ENCODE measurements at regions of chr15 and their contacts with region 1.

Region 1: DNA sequence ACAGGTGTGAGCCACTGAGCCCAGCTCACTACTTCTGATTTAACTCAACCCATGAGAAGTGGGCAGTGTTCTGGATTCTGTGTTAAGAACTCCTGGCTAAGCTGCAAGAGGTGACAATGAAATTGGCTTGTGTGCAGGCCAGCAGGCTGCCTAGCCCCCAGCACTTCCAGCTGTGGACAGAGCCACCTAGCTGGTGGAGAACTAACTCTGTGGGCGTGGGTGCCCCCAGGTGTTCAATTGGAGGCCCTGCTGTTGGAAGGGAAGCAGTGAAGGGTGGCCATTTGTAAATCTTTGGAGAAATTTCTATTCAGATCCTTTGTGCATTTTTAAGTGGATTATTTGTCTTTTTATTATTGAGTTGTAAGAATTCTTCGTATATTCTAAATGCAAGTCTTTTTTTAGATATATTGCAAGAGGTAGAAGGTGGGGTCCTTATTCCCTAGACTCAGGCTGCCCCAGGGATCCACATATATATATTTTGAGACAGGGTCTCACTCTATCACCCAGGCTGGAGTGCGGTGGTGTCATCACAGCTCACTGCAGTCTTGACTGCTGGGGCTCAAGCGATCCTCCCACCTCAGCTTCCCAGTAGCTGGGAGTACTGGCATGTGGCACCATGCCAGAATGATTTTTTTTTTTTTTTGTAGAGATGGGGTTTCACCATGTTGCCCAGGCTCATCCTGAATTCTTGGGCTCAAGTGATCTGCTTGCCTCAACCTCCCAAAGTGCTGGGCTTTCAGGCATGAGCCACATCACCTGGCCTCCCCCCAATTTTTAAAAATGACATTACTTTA is 7.2 kb upstream of the SCAMP5 start:
- DNase-seq: peak; percentile 51 to 78 (median 62)
- ATAC-seq: peak; percentile 100
- H3K4me3 ChIP-seq: no peak overlapping the region
- H3K27ac ChIP-seq: no peak overlapping the region
- H3K4me1 ChIP-seq: no peaks in the 10 kb centered on the region
- H3K27me3 ChIP-seq: peaks cover 16 to 36% of the 10 kb centered on the region in 2 experiments
- CTCF ChIP-seq: peak; percentile 85 to 94 (median 91)
- EP300 ChIP-seq: no peak
- POLR2A ChIP-seq: no peak
- RAD21 ChIP-seq: peak; percentile 79 to 93

Region 2: GRCh38 chr15:74635228-74635627 is 353.0 kb before region 1 on chr15:
- CTCF ChIA-PET with region 1: interaction called, 3 read pairs
- POLR2A ChIA-PET with region 1: no interaction called
- in situ Hi-C with region 1: no loop called
- intact Hi-C with region 1: loop called (anchors 5 kb)
- DNase-seq: peak; percentile 75 to 83 (median 76)
- ATAC-seq: peak; percentile 89
- H3K4me3 ChIP-seq: no peak overlapping the region
- H3K27ac ChIP-seq: no peak overlapping the region
- H3K4me1 ChIP-seq: no peaks in the 10 kb centered on the region; a peak in 1 of 5 replicates
- H3K27me3 ChIP-seq: no peaks in the 10 kb centered on the region
- CTCF ChIP-seq: peak; percentile 88 to 91 (median 90)
- EP300 ChIP-seq: no peak
- POLR2A ChIP-seq: no peak
- RAD21 ChIP-seq: peak; percentile 82 to 97

Region 3: GRCh38 chr15:74768771-74769342 is 219.3 kb before region 1 on chr15:
- CTCF ChIA-PET with region 1: interaction called, 16 read pairs
- POLR2A ChIA-PET with region 1: interaction called, 3 read pairs
- in situ Hi-C with region 1: no loop called
- intact Hi-C with region 1: loop called (anchors 1 kb)
- DNase-seq: peak; percentile 72 to 80 (median 75)
- ATAC-seq: peak; percentile 75
- H3K4me3 ChIP-seq: no peak overlapping the region
- H3K27ac ChIP-seq: no peak overlapping the region
- H3K4me1 ChIP-seq: peaks cover 0 to 12% of the 10 kb centered on the region in 2 experiments; a peak in 1 of 5 replicates
- H3K27me3 ChIP-seq: peaks cover 4 to 27% of the 10 kb centered on the region in 2 experiments; a peak in 3 of 5 replicates
- CTCF ChIP-seq: peak; percentile 84 to 85 (median 84)
- EP300 ChIP-seq: no peak
- POLR2A ChIP-seq: no peak
- RAD21 ChIP-seq: peak; percentile 73 to 92

Region 4: DNA sequence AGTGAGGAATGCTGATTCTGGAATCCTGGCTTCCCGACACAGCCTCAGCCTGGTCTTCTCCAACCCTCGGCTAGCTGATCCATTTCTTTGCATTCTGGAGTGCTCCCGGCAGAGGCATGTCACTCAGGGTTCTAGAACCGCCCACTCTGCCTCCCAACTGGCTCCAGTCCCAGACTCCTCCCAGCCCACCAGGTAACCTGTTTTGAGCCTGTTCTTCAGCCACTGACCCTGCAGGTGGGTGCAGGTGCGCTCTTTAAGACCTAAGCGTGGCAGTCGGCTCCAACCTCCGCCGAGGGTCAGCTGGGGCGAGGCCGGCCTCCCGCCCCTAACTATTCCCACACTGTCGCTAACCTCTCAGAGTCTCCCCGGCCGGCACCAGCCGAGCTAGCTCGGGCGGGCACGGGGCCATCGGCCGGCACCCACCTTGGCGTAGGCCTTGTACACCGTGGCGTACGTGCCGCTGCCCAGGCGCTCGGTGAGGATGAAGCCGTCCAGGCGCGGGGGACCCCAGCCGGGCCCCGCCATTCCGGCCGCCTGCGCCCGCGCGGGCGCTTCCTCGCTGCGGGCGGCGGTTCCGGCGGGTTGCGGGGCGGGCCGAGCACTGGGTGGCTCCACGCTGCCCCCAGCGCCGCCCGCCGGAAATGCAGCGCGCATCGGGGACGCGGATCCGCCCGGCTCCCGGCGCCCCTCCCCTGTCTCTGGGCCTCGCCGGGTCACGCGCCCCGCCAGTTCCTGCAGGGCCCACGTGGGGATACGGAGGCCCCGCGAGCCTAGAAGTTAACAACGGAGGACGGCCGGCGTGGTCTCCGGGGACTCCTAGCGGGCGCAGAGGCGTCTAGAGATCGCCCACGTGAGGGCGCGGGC is 145.4 kb before region 1 on chr15 and contains the start of gene ULK3:
- CTCF ChIA-PET with region 1: no interaction called
- POLR2A ChIA-PET with region 1: no interaction called
- in situ Hi-C with region 1: no loop called
- intact Hi-C with region 1: loop called (anchors 5 kb)
- DNase-seq: peak; percentile 93 to 96 (median 94)
- ATAC-seq: peak; percentile 91
- H3K4me3 ChIP-seq: peak within 1 kb of the TSS; percentile 99
- H3K27ac ChIP-seq: peak within 1 kb of the TSS; percentile 77
- H3K4me1 ChIP-seq: peaks cover 19 to 59% of the 10 kb centered on the region in 2 experiments; a peak in 4 of 5 replicates
- H3K27me3 ChIP-seq: no peaks in the 10 kb centered on the region
- CTCF ChIP-seq: peak; percentile 67 to 85 (median 78)
- EP300 ChIP-seq: no peak
- POLR2A ChIP-seq: peak; percentile 81
- RAD21 ChIP-seq: peak; percentile 33 to 39
- polyA plus RNA-seq, gene ULK3: 0.68 to 0.88 TPM

Region 5: GRCh38 chr15:74906446-74907162 is 81.6 kb before region 1 on chr15 and contains the start of gene FAM219B:
- CTCF ChIA-PET with region 1: no interaction called
- POLR2A ChIA-PET with region 1: no interaction called
- in situ Hi-C with region 1: no loop called
- intact Hi-C with region 1: loop called (anchors 5 kb)
- DNase-seq: peak; percentile 94 to 96 (median 95)
- ATAC-seq: peak; percentile 97
- H3K4me3 ChIP-seq: peak within 1 kb of the TSS; percentile 95
- H3K27ac ChIP-seq: peak within 1 kb of the TSS; percentile 89
- H3K4me1 ChIP-seq: peaks cover 11 to 14% of the 10 kb centered on the region in 2 experiments; a peak in 4 of 5 replicates
- H3K27me3 ChIP-seq: no peaks in the 10 kb centered on the region
- CTCF ChIP-seq: no peak; a peak in 1 of 6 replicates
- EP300 ChIP-seq: no peak
- POLR2A ChIP-seq: peak; percentile 87
- RAD21 ChIP-seq: no peak
- polyA plus RNA-seq, gene FAM219B: 6.8 to 10.2 TPM

Region 6: GRCh38 chr15:74956648-74957300 is 31.4 kb before region 1 on chr15 and contains the start of gene RPP25:
- CTCF ChIA-PET with region 1: interaction called, 3 read pairs
- POLR2A ChIA-PET with region 1: interaction called, 4 read pairs
- in situ Hi-C with region 1: no loop called
- intact Hi-C with region 1: loop called (anchors 2 kb)
- DNase-seq: peak; percentile 85 to 90 (median 88)
- ATAC-seq: peak; percentile 91
- H3K4me3 ChIP-seq: peak within 1 kb of the TSS; percentile 52
- H3K27ac ChIP-seq: peak within 1 kb of the TSS; percentile 68
- H3K4me1 ChIP-seq: peaks cover 36 to 63% of the 10 kb centered on the region in 2 experiments
- H3K27me3 ChIP-seq: peaks cover 23 to 32% of the 10 kb centered on the region in 2 experiments
- CTCF ChIP-seq: no peak
- EP300 ChIP-seq: no peak
- POLR2A ChIP-seq: peak; percentile 70; the same call in 1 of the 2 replicates
- RAD21 ChIP-seq: no peak
- polyA plus RNA-seq, gene RPP25: 1.1 to 1.3 TPM

Region 7: DNA sequence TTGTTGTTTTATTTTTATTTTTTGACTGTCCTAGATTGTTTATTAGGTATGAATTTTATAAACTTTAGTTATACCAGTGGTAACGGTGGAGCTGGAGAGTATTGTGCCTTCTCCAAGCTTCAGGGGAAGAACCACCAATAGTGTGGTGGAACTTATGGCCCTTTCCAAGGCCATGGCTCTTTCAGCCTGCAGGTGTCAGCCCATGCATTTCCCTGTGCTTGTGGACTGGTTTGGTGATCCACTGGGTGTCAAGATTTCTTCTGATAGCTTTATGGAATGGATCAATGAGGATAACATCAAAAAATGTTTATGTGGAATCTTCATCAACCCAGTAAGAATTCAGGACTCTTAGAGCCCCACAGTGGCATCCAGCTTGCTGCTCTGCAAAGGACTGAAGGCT is 12.0 kb before region 1 on chr15:
- CTCF ChIA-PET with region 1: no interaction called
- POLR2A ChIA-PET with region 1: no interaction called
- in situ Hi-C with region 1: no loop called
- intact Hi-C with region 1: no loop called
- DNase-seq: no peak
- ATAC-seq: no peak
- H3K4me3 ChIP-seq: no peak overlapping the region
- H3K27ac ChIP-seq: no peak overlapping the region
- H3K4me1 ChIP-seq: no peaks in the 10 kb centered on the region
- H3K27me3 ChIP-seq: peaks cover 12 to 25% of the 10 kb centered on the region in 2 experiments; a peak in 3 of 5 replicates
- CTCF ChIP-seq: no peak; a peak in 1 of 6 replicates
- EP300 ChIP-seq: no peak
- POLR2A ChIP-seq: no peak
- RAD21 ChIP-seq: no peak